ENCODE measurements at regions of chr2 and their contacts with region 1.

Region 1: GRCh38 chr2:159879051-159879604 is 81.1 kb upstream of the CD302 start:
- DNase-seq: no peak
- H3K4me3 Mint-ChIP-seq: no peak overlapping the region
- H3K27ac Mint-ChIP-seq: peak overlapping the region; percentile 85
- H3K4me1 Mint-ChIP-seq: peaks cover 20% of the 10 kb centered on the region
- H3K27me3 Mint-ChIP-seq: no peaks in the 10 kb centered on the region

Region 2: DNA sequence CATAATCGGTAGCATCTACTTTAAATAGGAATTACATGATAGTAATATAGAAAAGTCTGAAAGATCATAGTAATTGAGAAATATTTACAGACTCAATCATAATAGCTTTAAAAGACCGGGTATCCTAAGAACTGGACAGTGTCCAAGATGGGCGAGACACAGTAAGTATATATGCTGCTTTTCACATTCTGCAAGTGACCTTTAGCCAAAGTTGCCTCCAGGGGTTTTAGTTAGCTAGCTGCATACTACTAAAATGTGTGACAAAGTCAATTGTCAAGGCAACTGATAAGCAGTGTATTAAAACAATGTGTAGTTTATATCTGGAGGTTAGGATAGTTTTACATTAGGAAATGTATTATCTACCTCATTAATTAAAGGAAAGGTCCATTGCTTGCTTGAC is 105.7 kb before region 1 on chr2:
- intact Hi-C with region 1: no loop called
- DNase-seq: no peak
- H3K4me3 Mint-ChIP-seq: no peak overlapping the region
- H3K27ac Mint-ChIP-seq: no peak overlapping the region
- H3K4me1 Mint-ChIP-seq: no peaks in the 10 kb centered on the region
- H3K27me3 Mint-ChIP-seq: no peaks in the 10 kb centered on the region

Region 3: GRCh38 chr2:159895258-159896065 is 16.3 kb after region 1 on chr2:
- intact Hi-C with region 1: loop called (anchors 1 kb)
- DNase-seq: no peak
- H3K4me3 Mint-ChIP-seq: no peak overlapping the region
- H3K27ac Mint-ChIP-seq: peak overlapping the region; percentile 78
- H3K4me1 Mint-ChIP-seq: peaks cover 33% of the 10 kb centered on the region
- H3K27me3 Mint-ChIP-seq: no peaks in the 10 kb centered on the region

Region 4: GRCh38 chr2:159904127-159904958 is 25.2 kb after region 1 on chr2:
- intact Hi-C with region 1: loop called (anchors 1 kb)
- DNase-seq: peak; percentile 93
- H3K4me3 Mint-ChIP-seq: peak within 1 kb of the TSS; percentile 98
- H3K27ac Mint-ChIP-seq: peak within 1 kb of the TSS; percentile 94
- H3K4me1 Mint-ChIP-seq: peaks cover 36% of the 10 kb centered on the region
- H3K27me3 Mint-ChIP-seq: no peaks in the 10 kb centered on the region

Region 5: GRCh38 chr2:159921752-159922404 is 42.8 kb after region 1 on chr2:
- intact Hi-C with region 1: loop called (anchors 5 kb)
- DNase-seq: peak; percentile 90
- H3K4me3 Mint-ChIP-seq: no peak overlapping the region
- H3K27ac Mint-ChIP-seq: no peak overlapping the region
- H3K4me1 Mint-ChIP-seq: peaks cover 11% of the 10 kb centered on the region
- H3K27me3 Mint-ChIP-seq: peaks cover 7% of the 10 kb centered on the region

Region 6: GRCh38 chr2:159960383-159960782 is 81.3 kb after region 1 on chr2:
- intact Hi-C with region 1: loop called (anchors 5 kb)
- DNase-seq: no peak
- H3K4me3 Mint-ChIP-seq: no peak overlapping the region
- H3K27ac Mint-ChIP-seq: no peak overlapping the region
- H3K4me1 Mint-ChIP-seq: peaks cover 10% of the 10 kb centered on the region
- H3K27me3 Mint-ChIP-seq: no peaks in the 10 kb centered on the region

Region 7: GRCh38 chr2:160042054-160042453 is 162.9 kb after region 1 on chr2:
- intact Hi-C with region 1: loop called (anchors 1 kb)
- DNase-seq: no peak
- H3K4me3 Mint-ChIP-seq: no peak overlapping the region
- H3K27ac Mint-ChIP-seq: no peak overlapping the region
- H3K4me1 Mint-ChIP-seq: peaks cover 2% of the 10 kb centered on the region
- H3K27me3 Mint-ChIP-seq: peaks cover 9% of the 10 kb centered on the region